Adrenal gland (tissue), 19 donors: ENCODE measurements at regions of chr15 and their contacts with region 1.

Region 1: DNA sequence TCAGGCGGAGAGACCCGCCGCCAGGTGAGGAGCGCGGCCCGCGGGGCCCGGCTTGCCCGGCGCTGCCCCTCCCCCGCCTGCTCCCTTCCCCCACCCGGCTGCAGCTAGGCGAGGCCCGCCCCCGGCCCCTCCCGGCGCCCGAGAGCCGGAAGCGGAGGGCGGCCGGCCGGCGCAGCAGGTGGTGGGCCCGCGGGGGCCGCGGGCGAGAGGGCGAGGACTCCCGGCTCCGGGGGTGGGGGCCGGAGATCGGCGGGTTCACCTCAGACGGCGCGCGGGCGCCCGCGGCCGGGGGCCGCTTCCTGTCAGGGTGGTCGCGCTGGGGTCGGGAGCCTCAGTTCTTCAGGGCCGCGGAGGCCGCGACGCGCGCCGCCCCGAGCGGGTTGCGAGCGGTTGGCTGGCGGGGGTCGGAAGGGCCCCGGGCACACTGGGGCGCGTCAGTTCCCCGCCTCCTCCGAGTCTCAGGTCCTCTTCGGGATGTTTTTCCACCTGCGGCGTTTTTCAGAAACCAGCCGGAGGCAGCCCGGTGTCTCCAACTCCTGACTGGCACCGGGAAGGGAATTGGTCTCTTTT is 395 bp downstream of the ZFAND6 start:
- DNase-seq: peak in 6 of 7 donors; percentile 45 to 70 (median 64)
- H3K4me3 ChIP-seq: peak overlapping the region in 3 of 4 donors; percentile 32 to 94 (median 87)
- H3K27ac ChIP-seq: peak overlapping the region; percentile 92 to 99 (median 97)
- H3K4me1 ChIP-seq: peaks cover 12 to 22% of the 10 kb centered on the region in 2 donors
- H3K27me3 ChIP-seq: no peaks in the 10 kb centered on the region
- CTCF ChIP-seq: no peak
- POLR2A ChIP-seq: peak in 1 of 2 donors; percentile 54

Region 2: GRCh38 chr15:80160570-80161156 is 100.8 kb after region 1 on chr15:
- intact Hi-C with region 1: loop called in 1 of 2 experiments (anchors 10 kb)
- DNase-seq: peak; percentile 67 to 92 (median 88)
- H3K4me3 ChIP-seq: no peak overlapping the region
- H3K27ac ChIP-seq: peak overlapping the region; percentile 63 to 97 (median 88)
- H3K4me1 ChIP-seq: peaks cover 46 to 54% of the 10 kb centered on the region in 2 donors
- H3K27me3 ChIP-seq: no peaks in the 10 kb centered on the region
- CTCF ChIP-seq: no peak
- POLR2A ChIP-seq: peak in 1 of 2 donors; percentile 74

Region 3: GRCh38 chr15:80173022-80173759 is 113.3 kb after region 1 on chr15:
- intact Hi-C with region 1: loop called (anchors 10 kb)
- DNase-seq: peak; percentile 64 to 91 (median 77)
- H3K4me3 ChIP-seq: no peak overlapping the region
- H3K27ac ChIP-seq: peak overlapping the region; percentile 64 to 93 (median 89)
- H3K4me1 ChIP-seq: peaks cover 7 to 18% of the 10 kb centered on the region in 2 donors
- H3K27me3 ChIP-seq: no peaks in the 10 kb centered on the region
- CTCF ChIP-seq: peak; percentile 38 to 79 (median 68)
- POLR2A ChIP-seq: no peak